ENCODE measurements at regions of chr17 and their contacts with region 1.

Region 1: GRCh38 chr17:76353599-76354316 is at the start of gene PRPSAP1:
- DNase-seq: peak; percentile 98
- H3K4me3 ChIP-seq: peak within 1 kb of the TSS; percentile 68 to 90 (median 72)
- H3K27ac ChIP-seq: peak within 1 kb of the TSS; percentile 81
- H3K4me1 ChIP-seq: peaks cover 8% of the 10 kb centered on the region
- H3K27me3 ChIP-seq: no peaks in the 10 kb centered on the region
- CTCF ChIP-seq: peak; percentile 5 to 63
- total RNA-seq, gene PRPSAP1: 56.4 to 84.0 TPM

Region 2: DNA sequence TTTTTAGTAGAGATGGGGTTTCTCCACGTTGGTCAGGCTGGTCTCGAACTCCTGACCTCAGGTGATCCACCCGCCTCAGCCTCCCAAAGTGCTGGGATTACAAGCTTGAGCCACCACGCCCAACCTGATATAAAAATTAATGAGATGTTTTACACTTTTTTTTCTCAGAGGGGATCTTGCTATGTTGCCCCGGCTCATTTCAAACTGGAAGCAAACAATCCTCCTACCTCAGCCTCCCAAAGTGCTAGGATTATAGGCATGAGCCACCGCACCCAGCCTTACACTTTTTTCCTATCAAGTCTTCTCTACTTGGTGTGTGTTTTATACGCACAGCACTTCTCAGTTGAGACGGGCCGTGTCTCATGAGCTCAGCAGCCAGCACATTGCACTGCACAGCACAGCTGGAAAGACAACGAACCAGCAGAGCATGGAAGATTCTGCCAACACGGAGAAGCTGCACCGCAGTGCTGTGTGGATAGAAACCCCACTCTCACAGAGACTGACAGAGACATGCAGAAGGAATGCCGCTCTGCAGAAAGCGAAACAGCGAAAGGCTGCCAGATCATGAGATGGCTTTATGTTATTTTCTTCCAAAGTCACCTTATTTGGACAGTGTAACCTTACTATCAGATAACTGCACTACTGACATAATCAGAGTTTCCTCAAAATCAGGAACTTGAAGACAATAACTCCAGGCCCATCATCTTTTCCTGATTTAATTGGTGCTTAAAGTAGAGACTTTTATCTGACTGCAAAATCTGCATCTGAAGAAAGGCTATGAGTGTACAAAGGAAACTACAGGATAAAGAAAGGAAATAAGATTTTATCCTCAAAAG is 39.1 kb before region 1 on chr17:
- CTCF ChIA-PET with region 1: no interaction called
- dilution Hi-C with region 1: loop called (anchors 5 kb)
- in situ Hi-C with region 1: no loop called
- intact Hi-C with region 1: no loop called
- DNase-seq: no peak
- H3K4me3 ChIP-seq: no peak overlapping the region
- H3K27ac ChIP-seq: no peak overlapping the region
- H3K4me1 ChIP-seq: no peaks in the 10 kb centered on the region
- H3K27me3 ChIP-seq: no peaks in the 10 kb centered on the region
- CTCF ChIP-seq: no peak

Region 3: GRCh38 chr17:76370261-76370993 is 16.7 kb after region 1 on chr17:
- CTCF ChIA-PET with region 1: interaction called, 5 read pairs
- dilution Hi-C with region 1: no loop called
- in situ Hi-C with region 1: no loop called
- intact Hi-C with region 1: loop called (anchors 1 kb)
- DNase-seq: peak; percentile 95
- H3K4me3 ChIP-seq: no peak overlapping the region
- H3K27ac ChIP-seq: peak overlapping the region; percentile 91
- H3K4me1 ChIP-seq: peaks cover 43% of the 10 kb centered on the region
- H3K27me3 ChIP-seq: no peaks in the 10 kb centered on the region
- CTCF ChIP-seq: peak; percentile 62

Measured in mammary epithelial cell (primary cell).